ENCODE measurements at regions of chr15 and their contacts with region 1.

Region 1: DNA sequence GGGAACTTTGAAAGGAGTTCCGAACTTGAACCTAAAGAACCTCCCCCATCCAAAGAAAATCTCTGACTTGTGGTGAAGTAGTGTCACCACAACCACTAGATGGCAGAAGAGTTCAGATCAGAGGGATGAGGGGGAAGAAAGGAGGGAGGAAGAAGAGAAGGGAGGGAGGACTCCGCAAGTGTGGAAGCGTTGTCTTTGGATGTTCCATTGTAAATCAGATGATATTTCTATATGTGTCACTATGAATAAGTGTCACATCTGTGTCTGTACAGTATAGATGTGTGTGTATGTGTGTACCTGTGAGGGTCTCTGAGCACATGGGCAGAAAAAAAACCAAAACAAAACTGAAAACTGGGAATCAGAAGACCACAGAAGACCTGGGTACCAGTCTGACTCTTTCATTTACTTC is 16.9 kb downstream of the SLC24A1 start:
- DNase-seq: peak; percentile 36
- ATAC-seq: peak; percentile 86
- H3K4me3 Mint-ChIP-seq: no peak overlapping the region
- H3K27ac Mint-ChIP-seq: no peak overlapping the region
- H3K4me1 Mint-ChIP-seq: peaks cover 10% of the 10 kb centered on the region
- H3K27me3 Mint-ChIP-seq: no peaks in the 10 kb centered on the region

Region 2: DNA sequence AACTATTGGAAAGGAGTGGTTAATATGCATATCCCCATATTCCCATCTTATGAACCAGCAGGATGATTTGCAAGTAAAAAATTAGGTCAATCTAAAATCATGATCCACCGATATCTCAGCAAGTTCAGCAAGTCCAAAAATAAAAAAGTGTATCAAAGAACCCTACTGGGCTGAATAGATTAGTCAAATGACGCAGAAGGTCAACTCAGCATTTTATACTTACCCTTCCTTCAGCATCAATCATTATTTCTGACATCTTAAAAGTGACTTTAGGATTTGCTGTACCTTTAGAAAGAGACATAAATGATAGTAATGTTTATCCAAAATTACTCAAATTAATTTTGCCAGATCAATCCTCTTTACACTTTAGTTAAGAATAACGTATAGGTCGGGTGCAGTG is 153.8 kb before region 1 on chr15:
- CTCF ChIA-PET with region 1: no interaction called
- POLR2A ChIA-PET with region 1: no interaction called
- intact Hi-C with region 1: no loop called
- DNase-seq: no peak
- ATAC-seq: no peak
- H3K4me3 Mint-ChIP-seq: no peak overlapping the region
- H3K27ac Mint-ChIP-seq: no peak overlapping the region
- H3K4me1 Mint-ChIP-seq: no peaks in the 10 kb centered on the region
- H3K27me3 Mint-ChIP-seq: no peaks in the 10 kb centered on the region

Region 3: DNA sequence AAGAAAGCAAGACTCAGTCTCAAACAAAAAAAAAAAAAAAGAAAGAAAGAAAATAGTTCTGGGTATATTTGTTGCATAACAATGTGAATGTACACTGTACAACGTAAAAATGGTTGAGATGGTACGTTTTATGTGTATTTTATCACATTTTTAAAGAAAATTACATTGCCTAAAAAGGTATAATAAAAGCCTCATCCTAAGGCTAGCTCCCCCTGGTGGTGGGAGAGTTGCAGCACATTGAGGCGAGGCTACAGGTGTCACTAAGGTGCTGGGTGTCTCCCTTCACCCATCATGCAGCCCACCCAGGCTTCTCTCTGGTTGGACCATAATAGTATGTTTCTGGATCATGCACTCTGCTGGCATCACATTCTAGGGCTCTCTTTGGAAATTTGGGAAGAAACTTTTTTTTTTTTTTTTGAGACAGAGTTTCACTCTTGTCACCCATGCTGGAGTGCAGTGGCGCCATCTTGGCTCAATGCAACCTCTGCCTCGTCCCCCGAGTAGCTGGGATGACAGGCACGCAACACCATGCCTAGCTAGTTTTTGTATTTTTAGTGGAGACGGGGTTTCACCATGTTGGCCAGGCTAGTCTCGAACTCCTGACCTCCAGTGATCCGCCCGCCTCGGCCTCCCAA is 218.3 kb after region 1 on chr15:
- CTCF ChIA-PET with region 1: interaction called, 12 read pairs
- POLR2A ChIA-PET with region 1: no interaction called
- intact Hi-C with region 1: loop called (anchors 1 kb)
- DNase-seq: peak; percentile 90
- ATAC-seq: peak; percentile 72
- H3K4me3 Mint-ChIP-seq: no peak overlapping the region
- H3K27ac Mint-ChIP-seq: no peak overlapping the region
- H3K4me1 Mint-ChIP-seq: peaks cover 14% of the 10 kb centered on the region
- H3K27me3 Mint-ChIP-seq: no peaks in the 10 kb centered on the region

Region 4: DNA sequence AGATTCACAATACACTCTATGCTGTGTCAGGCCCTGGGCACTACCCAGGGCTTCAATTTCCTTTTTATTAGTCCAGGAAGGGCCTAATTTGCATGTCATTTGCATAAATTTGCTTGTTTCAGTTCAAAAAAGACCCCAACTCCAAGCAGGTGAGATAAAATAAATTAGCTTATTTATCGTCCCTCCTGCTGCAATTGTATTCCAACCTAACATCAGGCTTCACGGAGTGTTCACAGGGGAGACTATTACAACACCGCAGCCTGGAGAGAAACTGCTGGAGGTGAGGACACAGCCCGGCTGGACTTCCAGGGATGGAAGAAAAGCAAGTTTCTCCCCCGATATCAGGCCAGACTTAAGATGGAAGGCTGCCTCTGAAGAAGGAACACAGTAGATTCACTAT is 552.1 kb after region 1 on chr15:
- CTCF ChIA-PET with region 1: no interaction called
- POLR2A ChIA-PET with region 1: no interaction called
- intact Hi-C with region 1: loop called (anchors 2 to 10 kb)
- DNase-seq: no peak
- ATAC-seq: no peak
- H3K4me3 Mint-ChIP-seq: no peak overlapping the region
- H3K27ac Mint-ChIP-seq: no peak overlapping the region
- H3K4me1 Mint-ChIP-seq: no peaks in the 10 kb centered on the region
- H3K27me3 Mint-ChIP-seq: peaks cover 1% of the 10 kb centered on the region

Region 5: GRCh38 chr15:66196602-66197001 is 557.9 kb after region 1 on chr15:
- CTCF ChIA-PET with region 1: no interaction called
- POLR2A ChIA-PET with region 1: no interaction called
- intact Hi-C with region 1: loop called (anchors 2 to 10 kb)
- DNase-seq: no peak
- ATAC-seq: no peak
- H3K4me3 Mint-ChIP-seq: no peak overlapping the region
- H3K27ac Mint-ChIP-seq: no peak overlapping the region
- H3K4me1 Mint-ChIP-seq: peaks cover 3% of the 10 kb centered on the region
- H3K27me3 Mint-ChIP-seq: peaks cover 1% of the 10 kb centered on the region

Region 6: DNA sequence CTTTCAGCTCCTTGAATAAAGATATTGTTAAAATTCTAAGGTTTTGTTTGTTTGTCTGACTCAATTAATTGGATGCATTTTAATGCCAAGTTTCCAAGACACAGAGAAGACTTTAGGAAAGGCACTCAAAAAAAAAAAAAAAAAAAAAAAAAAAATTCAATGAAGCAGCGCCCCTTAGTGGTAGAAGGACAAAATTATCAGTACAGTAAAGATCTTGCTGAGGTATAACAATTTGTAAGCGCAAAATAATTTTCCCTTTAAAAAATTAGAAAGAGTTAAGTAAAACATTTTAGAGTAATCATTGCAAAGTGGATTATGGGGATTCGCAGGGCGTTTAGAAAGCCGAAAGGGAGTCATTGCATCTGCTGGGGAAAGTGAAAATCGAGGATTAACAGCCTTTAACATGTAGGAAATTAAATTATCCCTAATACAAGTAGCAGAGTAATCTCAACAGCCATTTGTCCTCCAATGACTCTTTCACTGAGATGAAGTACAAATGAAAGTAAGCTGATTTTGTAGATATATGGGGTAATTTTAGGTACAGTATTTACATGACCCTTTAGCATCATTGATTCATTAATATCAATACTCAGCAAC is 648.9 kb after region 1 on chr15:
- CTCF ChIA-PET with region 1: interaction called, 4 read pairs
- POLR2A ChIA-PET with region 1: no interaction called
- intact Hi-C with region 1: loop called in 1 of 2 experiments (anchors 2 kb)
- DNase-seq: no peak
- ATAC-seq: no peak
- H3K4me3 Mint-ChIP-seq: no peak overlapping the region
- H3K27ac Mint-ChIP-seq: no peak overlapping the region
- H3K4me1 Mint-ChIP-seq: peaks cover 25% of the 10 kb centered on the region
- H3K27me3 Mint-ChIP-seq: no peaks in the 10 kb centered on the region

Measured in activated CD4-positive, alpha-beta T cell treated with anti-CD3 and anti-CD28 coated beads for 36 hours (primary cell).